Heart right ventricle (tissue), 16 donors: ENCODE measurements at regions of chr6 and their contacts with region 1.

Region 1: DNA sequence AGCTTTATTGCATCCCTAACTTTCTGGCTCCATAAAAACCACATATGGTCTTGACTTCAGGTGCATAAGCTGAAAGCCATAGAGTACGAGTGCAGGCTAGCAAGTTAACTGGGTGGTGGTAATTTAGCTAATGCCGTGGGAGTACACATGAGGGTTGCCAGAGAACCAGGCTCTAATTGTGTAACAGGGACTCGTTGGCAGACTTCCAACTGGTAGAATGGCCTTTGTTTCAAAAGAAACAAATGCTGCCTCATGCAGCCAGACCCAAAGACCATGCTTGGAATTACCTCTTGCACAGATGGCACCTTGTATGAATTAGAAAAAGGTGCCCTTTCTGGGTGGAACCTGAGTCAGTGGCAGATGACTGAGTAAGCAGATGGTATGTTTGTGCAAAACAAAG is 73.2 kb downstream of the LY86 start:
- DNase-seq: peak in 1 of 2 donors; percentile 87
- ATAC-seq: peak; percentile 71 to 81 (median 75)
- H3K4me3 ChIP-seq: no peak overlapping the region
- H3K27ac ChIP-seq: peak overlapping the region in 7 of 10 donors; percentile 42 to 92 (median 60)
- H3K4me1 ChIP-seq: peaks cover 3 to 77% (median 65%) of the 10 kb centered on the region in 9 donors
- H3K27me3 ChIP-seq: no peaks in the 10 kb centered on the region
- CTCF ChIP-seq: no peak

Region 2: DNA sequence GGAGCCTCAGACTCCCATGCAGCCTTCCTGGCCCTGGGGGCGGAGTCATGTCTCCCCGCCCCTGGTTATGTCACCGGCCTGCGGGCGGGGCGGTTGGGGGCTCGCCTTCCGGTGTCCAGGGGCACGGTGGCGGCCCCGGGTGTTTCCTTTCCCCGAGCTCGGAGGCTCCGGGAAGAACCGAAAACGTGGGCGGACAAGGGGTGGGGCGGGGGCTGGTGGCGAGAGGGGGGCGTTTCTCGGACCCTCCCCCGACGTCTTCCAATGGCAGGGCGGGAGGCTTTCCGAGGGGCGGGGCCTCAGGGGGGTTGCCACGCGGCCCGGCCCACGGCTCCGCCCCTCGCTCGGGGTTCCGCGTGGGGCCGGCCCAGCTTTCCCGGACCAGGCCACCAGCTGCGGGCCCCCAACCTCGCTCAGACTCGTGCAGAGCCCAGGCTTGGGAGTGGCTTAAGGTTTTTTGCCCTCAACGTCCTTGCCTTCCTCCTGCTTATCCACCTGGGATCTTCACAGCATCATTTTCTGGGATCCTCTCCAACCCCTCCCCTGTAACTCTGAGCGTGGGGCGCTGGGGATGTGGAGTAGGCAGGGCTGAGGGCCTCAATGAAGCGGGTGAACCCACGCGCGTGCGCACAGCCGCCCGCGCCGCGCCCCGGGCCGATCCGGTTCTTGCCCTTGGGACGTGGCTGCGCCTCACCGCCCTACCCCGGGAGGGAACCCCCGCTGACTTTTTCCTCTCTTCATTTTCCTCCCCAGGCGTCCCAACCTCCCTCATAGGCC is 652.8 kb before region 1 on chr6:
- intact Hi-C with region 1: loop called in 1 of 10 experiments (anchors 10 kb)
- DNase-seq: peak; percentile 73 to 76
- ATAC-seq: peak; percentile 75 to 91 (median 88)
- H3K4me3 ChIP-seq: peak overlapping the region; percentile 10 to 67 (median 56)
- H3K27ac ChIP-seq: peak overlapping the region; percentile 6 to 91 (median 78)
- H3K4me1 ChIP-seq: peaks cover 4 to 53% (median 28%) of the 10 kb centered on the region in 9 donors
- H3K27me3 ChIP-seq: peaks cover 19 to 99% (median 84%) of the 10 kb centered on the region in 7 donors
- CTCF ChIP-seq: no peak

Region 3: GRCh38 chr6:6556738-6557505 is 104.8 kb before region 1 on chr6:
- intact Hi-C with region 1: loop called in 6 of 10 experiments (anchors 10 kb)
- DNase-seq: peak; percentile 23 to 49
- ATAC-seq: peak; percentile 70 to 86 (median 76)
- H3K4me3 ChIP-seq: no peak overlapping the region
- H3K27ac ChIP-seq: no peak overlapping the region
- H3K4me1 ChIP-seq: peaks cover 0 to 14% (median 0%) of the 10 kb centered on the region in 9 donors
- H3K27me3 ChIP-seq: peaks cover 0 to 5% (median 0%) of the 10 kb centered on the region in 7 donors
- CTCF ChIP-seq: peak; percentile 80 to 96 (median 93)

Region 4: DNA sequence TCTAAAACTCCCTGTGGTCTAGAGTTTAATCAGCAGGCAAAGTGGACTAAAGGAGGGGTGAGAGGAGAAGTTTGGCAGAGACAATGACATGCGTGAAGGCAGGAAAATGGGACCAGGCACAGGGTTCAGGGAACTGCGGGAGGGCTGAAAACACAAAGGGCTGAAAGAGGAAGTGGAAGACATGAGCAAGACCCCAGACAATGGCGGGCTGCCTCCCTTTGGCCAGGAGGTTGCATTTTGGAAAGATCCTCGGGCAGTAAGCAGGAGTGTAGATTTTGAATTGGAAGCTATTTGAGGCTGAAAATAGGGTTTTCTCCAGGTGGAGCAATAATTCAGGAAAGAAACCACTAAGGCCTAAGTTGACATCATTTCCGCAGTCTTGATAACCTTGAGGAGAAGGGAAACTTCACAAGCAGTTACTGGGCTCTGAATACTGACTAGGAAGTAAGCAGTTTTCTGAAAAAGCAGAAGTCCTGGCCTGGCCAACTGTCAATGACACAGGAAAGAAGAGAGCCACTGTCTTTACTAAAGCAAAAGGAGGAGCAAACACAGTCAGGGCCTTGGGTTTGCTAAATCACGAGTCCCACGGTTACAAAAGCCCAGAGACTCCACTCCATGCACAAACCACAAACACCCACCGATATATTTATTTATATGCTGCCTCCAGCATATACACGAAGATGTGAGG is 69.8 kb before region 1 on chr6:
- intact Hi-C with region 1: loop called in 6 of 10 experiments (anchors 5 to 10 kb)
- DNase-seq: peak in 1 of 2 donors; percentile 46
- ATAC-seq: peak; percentile 7 to 48 (median 30)
- H3K4me3 ChIP-seq: no peak overlapping the region
- H3K27ac ChIP-seq: peak overlapping the region in 9 of 10 donors; percentile 9 to 86 (median 83)
- H3K4me1 ChIP-seq: peaks cover 15 to 87% (median 70%) of the 10 kb centered on the region in 9 donors
- H3K27me3 ChIP-seq: no peaks in the 10 kb centered on the region
- CTCF ChIP-seq: no peak

Region 5: DNA sequence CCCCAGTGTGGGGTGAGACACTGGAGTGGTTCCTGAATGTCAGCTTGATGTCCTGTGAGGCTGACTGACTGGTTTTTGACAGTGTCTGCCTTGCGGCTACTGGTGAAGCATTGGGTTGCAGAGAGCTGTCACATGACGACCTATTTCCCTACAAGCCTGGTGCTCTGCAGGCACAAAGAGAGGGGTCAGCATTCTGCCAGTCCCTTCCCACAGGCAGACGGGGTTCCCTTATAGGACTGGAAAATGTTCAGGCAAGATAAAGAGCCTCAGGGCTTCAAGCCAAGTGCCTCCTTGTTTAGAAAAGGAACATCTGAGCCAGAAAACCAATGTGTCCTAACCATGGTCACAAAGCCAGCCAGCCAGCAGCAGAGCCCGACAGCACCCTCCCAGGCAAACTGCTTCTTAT is 62.2 kb before region 1 on chr6:
- intact Hi-C with region 1: loop called in 6 of 10 experiments (anchors 5 to 10 kb)
- DNase-seq: peak in 1 of 2 donors; percentile 45
- ATAC-seq: peak; percentile 59 to 85 (median 74)
- H3K4me3 ChIP-seq: no peak overlapping the region
- H3K27ac ChIP-seq: peak overlapping the region in 3 of 10 donors; percentile 8 to 59 (median 52)
- H3K4me1 ChIP-seq: peaks cover 3 to 53% (median 43%) of the 10 kb centered on the region in 9 donors
- H3K27me3 ChIP-seq: no peaks in the 10 kb centered on the region
- CTCF ChIP-seq: no peak